CD4-positive, alpha-beta memory T cell (primary cell): ENCODE measurements at regions of chr2 and their contacts with region 1.

Region 1: DNA sequence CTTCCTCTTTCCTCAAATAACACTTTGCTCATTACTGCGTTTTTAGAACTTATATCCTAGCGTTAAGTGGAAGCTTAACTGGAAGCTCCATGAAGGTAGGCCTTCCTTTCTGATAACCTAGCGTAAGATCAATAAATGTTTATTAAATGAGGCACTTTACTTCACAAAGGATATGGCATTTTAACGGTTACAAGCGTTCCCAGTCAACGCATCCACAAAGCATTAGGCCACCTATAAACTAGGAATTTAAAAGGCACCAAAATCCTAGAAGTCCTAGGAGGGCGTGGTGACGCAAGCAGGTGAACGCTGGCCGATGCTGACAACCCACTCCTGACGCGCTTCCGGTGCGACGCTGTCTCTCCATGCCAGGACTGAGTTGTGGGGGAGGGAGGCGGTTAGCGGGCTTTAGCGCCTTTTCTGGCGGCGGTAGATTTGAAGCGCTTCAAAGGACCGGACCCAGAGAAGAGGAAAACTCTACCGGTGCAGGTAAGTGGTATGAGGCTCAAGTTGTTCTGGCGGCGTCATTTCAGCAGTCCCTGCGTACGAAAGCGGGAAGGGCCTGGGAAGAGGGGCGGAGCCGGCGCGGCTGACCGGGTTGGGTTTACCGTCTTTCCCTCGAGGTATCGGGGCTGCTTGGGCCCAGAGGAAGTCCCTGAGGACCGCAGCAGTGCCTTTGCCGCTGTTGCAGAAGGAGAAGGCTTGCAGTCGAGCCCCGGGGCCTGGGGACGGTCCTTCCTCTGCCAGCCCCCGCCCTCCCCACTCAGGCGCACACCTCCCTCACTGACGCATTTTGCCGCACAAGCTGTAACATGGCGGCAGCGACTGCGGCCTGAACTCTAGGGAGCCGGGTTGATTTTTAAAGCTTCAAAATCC is at the start of gene PPIG:
- DNase-seq: peak; percentile 86 to 93 (median 89)
- H3K4me3 ChIP-seq: peak within 1 kb of the TSS; percentile 76 to 92
- H3K4me3 Mint-ChIP-seq: peak within 1 kb of the TSS; percentile 96 to 100 (median 98)
- H3K27ac ChIP-seq: peak within 1 kb of the TSS; percentile 94
- H3K27ac Mint-ChIP-seq: peak within 1 kb of the TSS; percentile 98 to 100 (median 100)
- H3K4me1 ChIP-seq: peaks cover 35% of the 10 kb centered on the region
- H3K4me1 Mint-ChIP-seq: peaks cover 20 to 49% (median 34%) of the 10 kb centered on the region in 4 donors
- H3K27me3 ChIP-seq: no peaks in the 10 kb centered on the region
- H3K27me3 Mint-ChIP-seq: no peaks in the 10 kb centered on the region
- total RNA-seq, gene PPIG: 79.2 to 82.9 TPM

Region 2: DNA sequence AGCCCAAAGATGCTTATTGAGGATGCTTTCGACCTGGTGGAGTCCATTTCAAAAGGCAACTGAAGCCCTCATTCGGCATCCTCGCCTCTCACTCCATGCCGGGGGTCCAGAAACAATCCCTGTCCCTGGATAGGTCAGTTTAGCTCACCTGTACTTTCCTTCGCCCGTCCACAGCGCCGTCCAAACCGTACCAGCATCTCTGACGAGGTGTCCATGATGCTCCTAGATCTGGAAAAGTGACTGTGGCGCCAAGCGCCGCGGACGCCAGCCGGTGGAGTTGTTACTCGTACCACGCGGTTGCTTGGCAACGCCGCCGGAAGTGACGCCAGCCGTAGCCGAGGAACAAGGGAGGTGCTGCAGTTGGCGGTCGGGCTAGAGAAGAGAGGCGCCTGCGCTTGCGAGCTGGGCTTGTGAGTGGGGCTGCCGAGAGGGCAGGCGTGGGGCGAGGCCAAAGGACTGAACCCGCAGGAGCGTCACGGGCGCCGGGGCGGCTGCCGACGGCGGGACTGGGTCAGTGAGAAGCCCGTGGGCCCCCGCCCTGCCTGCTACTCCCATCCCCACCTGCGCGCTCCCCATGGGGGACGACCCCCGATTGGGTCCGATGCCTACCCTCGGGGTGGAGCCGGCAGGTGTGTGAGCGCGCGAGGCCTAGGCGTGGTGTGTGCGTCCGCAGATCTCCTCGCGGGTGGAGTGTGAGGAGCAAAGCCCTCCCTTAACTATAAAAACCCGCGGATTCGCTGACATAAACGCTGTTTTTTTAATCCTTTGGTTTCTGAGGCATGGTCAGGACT is 110.1 kb after region 1 on chr2 and contains the starts of genes CFAP210 and PHOSPHO2:
- CTCF ChIA-PET with region 1: no interaction called
- POLR2A ChIA-PET with region 1: interaction called, 10 read pairs
- intact Hi-C with region 1: loop called (anchors 1 kb)
- DNase-seq: peak; percentile 98 to 99 (median 99)
- H3K4me3 ChIP-seq: peak within 1 kb of the TSS; percentile 37 to 69
- H3K4me3 Mint-ChIP-seq: peak within 1 kb of the TSS; percentile 88 to 96 (median 92)
- H3K27ac ChIP-seq: peak within 1 kb of the TSS; percentile 72
- H3K27ac Mint-ChIP-seq: peak within 1 kb of the TSS; percentile 93 to 100 (median 99)
- H3K4me1 ChIP-seq: peaks cover 15% of the 10 kb centered on the region
- H3K4me1 Mint-ChIP-seq: peaks cover 12 to 21% (median 16%) of the 10 kb centered on the region in 4 donors
- H3K27me3 ChIP-seq: no peaks in the 10 kb centered on the region
- H3K27me3 Mint-ChIP-seq: peaks cover 5 to 8% of the 10 kb centered on the region in 2 donors
- total RNA-seq, gene CFAP210: not detected
- total RNA-seq, gene PHOSPHO2: 7.2 to 7.4 TPM

Region 3: GRCh38 chr2:169798718-169799592 is 214.7 kb after region 1 on chr2 and contains the start of gene SSB:
- CTCF ChIA-PET with region 1: no interaction called
- POLR2A ChIA-PET with region 1: interaction called, 6 read pairs
- intact Hi-C with region 1: loop called (anchors 1 kb)
- DNase-seq: peak; percentile 87 to 95 (median 89)
- H3K4me3 ChIP-seq: peak within 1 kb of the TSS; percentile 45 to 95
- H3K4me3 Mint-ChIP-seq: peak within 1 kb of the TSS; percentile 84 to 95 (median 92)
- H3K27ac ChIP-seq: peak within 1 kb of the TSS; percentile 85
- H3K27ac Mint-ChIP-seq: peak within 1 kb of the TSS; percentile 93 to 97 (median 95)
- H3K4me1 ChIP-seq: peaks cover 43% of the 10 kb centered on the region
- H3K4me1 Mint-ChIP-seq: peaks cover 16 to 45% (median 33%) of the 10 kb centered on the region in 4 donors
- H3K27me3 ChIP-seq: no peaks in the 10 kb centered on the region
- H3K27me3 Mint-ChIP-seq: peaks cover 0 to 5% of the 10 kb centered on the region in 2 donors
- total RNA-seq, gene SSB: 112 to 114 TPM